GM12878 (cell line): ENCODE measurements at regions of chr17 and their contacts with region 1.

Region 1: GRCh38 chr17:2087597-2088211 is 32.8 kb downstream of the HIC1 start:
- DNase-seq: peak; percentile 79
- ATAC-seq: peak; percentile 56
- H3K4me3 ChIP-seq: no peak overlapping the region
- H3K27ac ChIP-seq: peak overlapping the region; percentile 93
- H3K4me1 ChIP-seq: peaks cover 83% of the 10 kb centered on the region
- H3K27me3 ChIP-seq: no peaks in the 10 kb centered on the region
- CTCF ChIP-seq: no peak
- EP300 ChIP-seq: peak; percentile 99
- POLR2A ChIP-seq: no peak; the same call in 1 of the 2 replicates
- RAD21 ChIP-seq: no peak

Region 2: DNA sequence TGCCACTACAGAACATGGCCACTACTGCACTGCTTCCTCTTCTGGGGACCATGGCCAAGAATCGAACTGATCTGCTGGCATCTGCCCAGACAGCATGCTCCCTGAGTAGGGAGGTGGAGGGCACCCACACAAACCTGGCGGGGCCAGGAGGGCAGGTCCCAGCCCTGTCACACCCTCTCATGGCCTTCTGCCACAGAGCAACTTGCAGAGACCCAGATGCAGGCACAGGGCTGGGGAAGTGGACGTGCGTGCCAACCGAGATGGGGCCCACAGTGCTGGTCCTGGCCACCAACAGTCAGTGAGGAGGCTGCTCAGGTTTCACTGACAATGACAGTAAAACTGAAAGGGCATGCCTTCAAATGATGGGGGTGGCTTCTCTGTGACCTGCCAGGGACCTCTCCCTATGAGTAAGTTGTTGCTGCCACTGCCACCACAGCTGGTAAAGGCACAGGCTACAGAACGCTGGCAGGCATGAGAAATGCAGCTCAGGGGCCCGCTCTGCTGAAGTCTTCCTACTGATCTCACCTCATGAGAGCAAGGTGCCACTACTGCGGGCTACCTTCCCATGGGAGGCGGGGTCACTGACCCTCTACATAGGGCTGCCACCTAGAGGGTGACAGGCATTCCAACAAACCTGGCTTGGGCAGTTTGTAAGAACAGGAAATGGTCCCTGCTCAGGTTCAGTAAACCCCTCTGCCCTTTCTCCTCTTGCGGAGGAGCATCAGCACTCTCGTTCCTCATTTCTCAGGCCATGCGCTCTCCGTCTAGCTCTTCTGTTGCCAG is 17.3 kb before region 1 on chr17:
- CTCF ChIA-PET with region 1: interaction called, 51 read pairs
- POLR2A ChIA-PET with region 1: interaction called, 148 read pairs
- RAD21 ChIA-PET with region 1: interaction called, 85 read pairs
- SMC1A ChIA-PET with region 1: interaction called, 107 read pairs
- in situ Hi-C with region 1: no loop called
- intact Hi-C with region 1: loop called (anchors 1 kb)
- DNase-seq: peak; percentile 96
- ATAC-seq: peak; percentile 93
- H3K4me3 ChIP-seq: peak overlapping the region; percentile 1; the same call in 1 of the 2 replicates
- H3K27ac ChIP-seq: peak overlapping the region; percentile 95
- H3K4me1 ChIP-seq: peaks cover 43% of the 10 kb centered on the region
- H3K27me3 ChIP-seq: no peaks in the 10 kb centered on the region
- CTCF ChIP-seq: peak in 2 of 3 experiments; percentile 7 to 22; a peak in 1 of 6 replicates
- EP300 ChIP-seq: peak; percentile 96 to 99
- POLR2A ChIP-seq: peak; percentile 79
- RAD21 ChIP-seq: 0 out of 2 replicates have a peak, but pooled peaks have one; percentile 0

Region 3: GRCh38 chr17:2137342-2138098 is 49.8 kb after region 1 on chr17:
- CTCF ChIA-PET with region 1: interaction called, 7 read pairs
- POLR2A ChIA-PET with region 1: interaction called, 45 read pairs
- RAD21 ChIA-PET with region 1: interaction called, 71 read pairs
- SMC1A ChIA-PET with region 1: interaction called, 78 read pairs
- in situ Hi-C with region 1: no loop called
- intact Hi-C with region 1: loop called (anchors 1 kb)
- DNase-seq: peak; percentile 51
- ATAC-seq: peak; percentile 86
- H3K4me3 ChIP-seq: no peak overlapping the region; the same call in 1 of the 2 replicates
- H3K27ac ChIP-seq: peak overlapping the region; percentile 87
- H3K4me1 ChIP-seq: peaks cover 41% of the 10 kb centered on the region
- H3K27me3 ChIP-seq: no peaks in the 10 kb centered on the region
- CTCF ChIP-seq: no peak
- EP300 ChIP-seq: no peak
- POLR2A ChIP-seq: peak; percentile 23; the same call in 1 of the 2 replicates
- RAD21 ChIP-seq: no peak

Region 4: DNA sequence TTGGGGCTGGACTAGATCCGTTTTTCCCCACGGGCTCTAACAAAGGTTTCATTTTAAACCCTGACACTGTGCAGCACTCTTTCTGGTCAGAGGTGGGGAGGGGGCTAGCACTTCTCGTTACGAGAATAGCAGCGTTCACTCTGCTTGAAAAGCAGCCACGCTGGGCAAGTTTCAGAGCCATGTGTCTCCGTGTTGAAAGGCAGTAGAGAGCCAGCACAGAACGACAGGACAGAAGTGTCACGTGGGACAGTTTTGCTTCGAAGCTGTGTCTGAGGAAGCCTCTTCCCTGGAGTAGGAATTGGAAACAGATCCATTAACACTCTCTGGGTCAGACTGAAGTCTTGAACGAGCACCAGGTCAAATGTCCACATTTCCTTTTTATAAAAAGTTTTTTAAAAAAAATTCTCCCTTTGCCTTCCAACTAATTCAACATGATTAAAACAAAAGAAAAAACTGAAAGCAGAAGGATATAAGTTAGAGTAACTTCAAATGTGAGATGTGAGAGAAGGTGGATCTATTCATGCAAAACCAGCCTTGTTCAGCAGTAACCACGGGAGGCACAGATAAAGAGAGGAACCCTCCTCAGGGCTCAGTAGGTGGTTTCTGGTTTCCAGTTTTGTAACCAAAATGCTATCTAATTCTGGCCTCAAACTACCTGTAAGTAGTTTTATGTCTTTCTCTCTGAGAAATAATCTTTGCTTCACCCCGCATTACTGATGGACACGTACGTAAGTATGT is 150.9 kb after region 1 on chr17:
- CTCF ChIA-PET with region 1: interaction called, 126 read pairs
- POLR2A ChIA-PET with region 1: interaction called, 20 read pairs
- RAD21 ChIA-PET with region 1: interaction called, 40 read pairs
- SMC1A ChIA-PET with region 1: interaction called, 39 read pairs
- in situ Hi-C with region 1: no loop called
- intact Hi-C with region 1: no loop called
- DNase-seq: peak; percentile 86
- ATAC-seq: peak; percentile 88
- H3K4me3 ChIP-seq: peak overlapping the region; percentile 45; the same call in 1 of the 2 replicates
- H3K27ac ChIP-seq: peak overlapping the region; percentile 99
- H3K4me1 ChIP-seq: peaks cover 50% of the 10 kb centered on the region
- H3K27me3 ChIP-seq: no peaks in the 10 kb centered on the region
- CTCF ChIP-seq: no peak
- EP300 ChIP-seq: 0 out of 4 replicates have a peak, but pooled peaks of 1 of the 2 experiments have one; percentile 34
- POLR2A ChIP-seq: peak; percentile 62
- RAD21 ChIP-seq: no peak

Region 5: DNA sequence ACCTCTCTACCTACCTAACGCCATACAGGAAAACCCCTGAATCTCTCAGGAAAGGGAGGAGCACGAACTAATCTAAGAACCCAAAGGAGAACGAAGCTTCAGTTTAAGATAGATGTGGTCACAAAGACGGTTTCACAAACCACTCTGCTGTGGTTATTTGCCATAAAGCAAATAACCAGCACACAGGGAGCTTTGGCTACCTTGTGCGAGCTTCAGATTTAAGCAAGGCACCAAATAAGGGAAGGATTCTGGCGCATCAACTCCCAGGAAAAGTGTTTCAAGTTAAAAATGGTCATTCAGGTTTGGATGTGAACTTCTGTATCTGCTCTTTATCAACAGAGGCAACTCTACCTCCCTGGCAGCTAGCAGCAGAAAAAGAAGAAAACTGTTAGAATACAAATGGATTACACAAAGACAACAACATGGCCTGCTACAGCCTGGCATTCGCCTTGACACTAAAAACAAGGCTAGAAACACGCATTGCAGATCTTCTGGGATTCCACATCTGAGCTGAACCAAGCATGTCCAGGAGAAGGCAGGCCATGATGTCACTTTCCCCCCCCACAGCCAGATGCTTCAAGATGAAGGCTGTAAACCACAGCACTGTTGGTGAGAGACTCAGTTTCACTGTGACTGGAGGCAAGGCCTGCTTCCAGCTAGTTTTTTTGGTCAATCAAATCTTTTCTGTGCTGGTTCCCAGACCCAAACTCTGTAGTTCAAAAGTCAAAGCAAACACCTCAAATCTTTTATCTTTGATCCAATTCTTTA is 172.2 kb after region 1 on chr17:
- CTCF ChIA-PET with region 1: interaction called, 12 read pairs
- POLR2A ChIA-PET with region 1: interaction called, 69 read pairs
- RAD21 ChIA-PET with region 1: interaction called, 61 read pairs
- SMC1A ChIA-PET with region 1: interaction called, 50 read pairs
- in situ Hi-C with region 1: no loop called
- intact Hi-C with region 1: no loop called
- DNase-seq: peak; percentile 85
- ATAC-seq: peak; percentile 91
- H3K4me3 ChIP-seq: peak overlapping the region; percentile 44; the same call in 1 of the 2 replicates
- H3K27ac ChIP-seq: peak overlapping the region; percentile 99
- H3K4me1 ChIP-seq: peaks cover 64% of the 10 kb centered on the region
- H3K27me3 ChIP-seq: no peaks in the 10 kb centered on the region
- CTCF ChIP-seq: no peak
- EP300 ChIP-seq: peak; percentile 67 to 80
- POLR2A ChIP-seq: peak; percentile 61
- RAD21 ChIP-seq: no peak

Region 6: DNA sequence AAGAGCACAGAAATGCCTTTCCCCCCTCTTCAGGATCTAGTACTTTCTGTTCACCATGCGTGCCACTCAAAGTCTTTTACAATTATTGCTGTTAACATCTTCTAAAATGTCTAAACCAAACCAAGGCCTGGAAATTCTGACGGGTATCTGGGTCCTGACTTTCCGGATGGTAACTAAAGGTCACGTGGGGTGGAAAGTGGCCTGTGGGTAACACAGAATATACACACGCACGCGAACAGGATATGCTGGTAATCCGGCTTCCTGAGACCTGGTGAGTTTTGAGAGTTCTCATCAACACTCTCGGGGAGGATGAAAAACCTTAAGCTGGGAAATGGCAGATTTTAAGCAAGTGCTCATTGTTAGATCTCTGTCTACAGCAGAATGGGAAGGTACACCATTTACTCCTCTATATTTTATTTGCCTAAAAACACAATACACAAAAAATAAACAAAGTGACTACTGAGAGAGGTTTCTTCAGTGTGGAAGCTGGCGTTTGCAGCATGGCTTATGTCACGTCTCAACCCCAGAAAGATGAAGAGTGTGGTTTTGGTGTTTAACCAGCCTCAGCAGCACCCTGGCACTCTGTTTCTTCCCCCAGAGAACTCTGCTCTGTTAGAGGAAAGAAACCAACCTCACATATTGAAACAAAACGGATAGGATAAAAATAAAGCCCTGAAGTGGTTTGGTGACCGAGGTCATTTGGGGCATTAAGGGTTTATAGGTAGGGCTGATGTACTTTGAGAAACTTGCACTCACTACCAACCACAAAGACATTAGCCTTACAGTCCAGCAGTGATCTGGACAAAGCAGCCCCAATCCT is 178.6 kb after region 1 on chr17:
- CTCF ChIA-PET with region 1: interaction called, 9 read pairs
- POLR2A ChIA-PET with region 1: interaction called, 69 read pairs
- RAD21 ChIA-PET with region 1: interaction called, 61 read pairs
- SMC1A ChIA-PET with region 1: interaction called, 50 read pairs
- in situ Hi-C with region 1: no loop called
- intact Hi-C with region 1: no loop called
- DNase-seq: peak; percentile 97
- ATAC-seq: peak; percentile 90
- H3K4me3 ChIP-seq: peak overlapping the region; percentile 28; the same call in 1 of the 2 replicates
- H3K27ac ChIP-seq: peak overlapping the region; percentile 99
- H3K4me1 ChIP-seq: peaks cover 61% of the 10 kb centered on the region
- H3K27me3 ChIP-seq: no peaks in the 10 kb centered on the region
- CTCF ChIP-seq: no peak
- EP300 ChIP-seq: peak; percentile 58 to 87; a peak in 3 of 4 replicates
- POLR2A ChIP-seq: peak; percentile 64
- RAD21 ChIP-seq: peak; percentile 16; the same call in 1 of the 2 replicates